GM10248 (cell line): ENCODE measurements at regions of chr7 and their contacts with region 1.

Region 1: GRCh38 chr7:142811154-142811737 is 40.5 kb downstream of the PRSS2 start:
- DNase-seq: no peak
- CTCF ChIP-seq: peak; percentile 71

Region 2: GRCh38 chr7:142535123-142535779 is 276.0 kb before region 1 on chr7:
- CTCF ChIA-PET with region 1: interaction called, 15 read pairs
- POLR2A ChIA-PET with region 1: no interaction called
- DNase-seq: peak; percentile 62
- CTCF ChIP-seq: peak; percentile 85

Region 3: DNA sequence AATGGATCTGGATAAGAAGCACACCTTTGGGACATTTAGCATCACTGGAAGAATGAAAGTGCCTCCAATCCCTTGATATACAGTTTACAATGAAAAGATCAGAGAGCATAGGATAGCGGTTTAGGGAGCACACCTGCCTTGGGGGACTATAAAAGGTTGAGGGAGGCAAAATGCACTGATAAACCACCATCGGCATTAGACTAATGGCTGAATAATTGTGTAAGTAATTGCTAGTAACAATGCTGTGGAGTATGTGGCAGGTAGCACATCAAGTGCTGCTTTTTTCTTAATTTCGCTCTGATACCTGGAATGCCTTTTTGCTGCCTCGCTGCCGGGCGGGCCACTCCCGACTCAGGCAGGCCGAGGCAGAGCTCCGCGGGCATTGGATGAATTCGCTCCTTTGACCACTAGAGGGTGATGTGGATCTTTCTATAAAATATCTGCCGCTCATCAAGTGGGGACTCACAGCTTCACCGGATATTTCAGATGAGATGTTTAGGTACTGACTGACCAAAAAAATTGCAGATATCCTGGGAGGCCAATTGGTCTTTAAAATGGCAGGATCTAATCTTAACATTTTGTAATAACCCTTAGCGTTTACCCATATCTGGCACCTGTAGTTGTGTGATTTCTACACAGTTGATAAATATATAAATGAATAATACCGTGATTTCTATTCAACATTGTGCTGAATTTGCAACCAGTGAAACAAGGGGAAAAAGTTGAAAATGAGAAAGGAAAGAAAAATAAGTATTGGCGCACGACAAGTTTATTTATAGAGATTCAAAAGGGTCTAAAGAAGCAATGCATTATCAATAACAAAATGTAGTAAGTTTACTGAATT is 178.7 kb before region 1 on chr7:
- CTCF ChIA-PET with region 1: interaction called, 191 read pairs
- POLR2A ChIA-PET with region 1: interaction called, 3 read pairs
- DNase-seq: peak; percentile 79
- CTCF ChIP-seq: peak; percentile 79

Region 4: GRCh38 chr7:142711746-142712619 is 99.3 kb before region 1 on chr7:
- CTCF ChIA-PET with region 1: interaction called, 73 read pairs
- POLR2A ChIA-PET with region 1: no interaction called
- DNase-seq: no peak
- CTCF ChIP-seq: peak; percentile 53

Region 5: GRCh38 chr7:142796608-142797385 is 14.4 kb before region 1 on chr7:
- CTCF ChIA-PET with region 1: interaction called, 316 read pairs
- POLR2A ChIA-PET with region 1: interaction called, 21 read pairs
- DNase-seq: peak; percentile 43
- CTCF ChIP-seq: no peak

Region 6: GRCh38 chr7:142853739-142854371 is 42.6 kb after region 1 on chr7:
- CTCF ChIA-PET with region 1: interaction called, 17 read pairs
- POLR2A ChIA-PET with region 1: no interaction called
- DNase-seq: peak; percentile 84
- CTCF ChIP-seq: peak; percentile 64

Region 7: GRCh38 chr7:142880876-142881505 is 69.7 kb after region 1 on chr7:
- CTCF ChIA-PET with region 1: no interaction called
- POLR2A ChIA-PET with region 1: no interaction called
- DNase-seq: peak; percentile 72
- CTCF ChIP-seq: peak; percentile 73

Region 8: GRCh38 chr7:142898377-142899170 is 87.3 kb after region 1 on chr7:
- CTCF ChIA-PET with region 1: no interaction called
- POLR2A ChIA-PET with region 1: no interaction called
- DNase-seq: no peak
- CTCF ChIP-seq: no peak